ENCODE measurements at regions of chr1 and their contacts with region 1.

Region 1: DNA sequence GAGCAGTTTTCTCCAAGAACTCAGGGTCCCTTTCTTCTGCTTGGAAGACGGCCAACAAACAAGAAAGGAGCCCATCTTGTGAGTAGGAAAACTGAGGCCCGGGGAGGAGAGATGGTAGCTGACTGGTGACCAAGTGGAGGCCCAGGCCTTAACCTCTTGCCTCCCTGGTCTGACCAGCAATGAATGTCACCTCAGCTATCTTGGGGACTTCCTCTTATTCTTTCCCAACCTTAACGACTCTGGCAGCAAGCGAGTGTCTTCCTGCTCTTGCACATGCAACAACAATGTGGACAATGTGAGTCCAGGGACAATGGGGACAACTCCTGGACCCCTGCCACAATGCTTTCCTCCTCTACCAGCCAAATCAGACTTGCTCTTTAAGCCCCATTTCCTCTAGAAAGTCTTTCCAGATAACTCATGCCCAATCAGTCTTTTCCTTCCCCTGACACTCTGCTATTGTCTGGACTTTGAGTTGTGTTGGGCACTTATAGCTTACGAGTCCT is 12.6 kb downstream of the HSPG2 start:
- DNase-seq: no peak
- CTCF ChIP-seq: no peak

Region 2: GRCh38 chr1:21911205-21912001 is 13.2 kb before region 1 on chr1:
- CTCF ChIA-PET with region 1: interaction called, 13 read pairs
- POLR2A ChIA-PET with region 1: no interaction called
- DNase-seq: peak; percentile 49
- CTCF ChIP-seq: no peak

Region 3: GRCh38 chr1:22231993-22232690 is 307.6 kb after region 1 on chr1:
- CTCF ChIA-PET with region 1: no interaction called
- POLR2A ChIA-PET with region 1: no interaction called
- DNase-seq: no peak
- CTCF ChIP-seq: peak; percentile 8

Measured in GM10248 (cell line).